Activated CD8-positive, alpha-beta T cell treated with anti-CD3 and anti-CD28 coated beads for 36 hours (primary cell): ENCODE measurements at regions of chr1 and their contacts with region 1.

Region 1: GRCh38 chr1:23184212-23184934 is 15.7 kb upstream of the LUZP1 start:
- DNase-seq: peak; percentile 50
- ATAC-seq: peak; percentile 34
- H3K4me3 Mint-ChIP-seq: peak overlapping the region; percentile 60
- H3K27ac Mint-ChIP-seq: no peak overlapping the region
- H3K4me1 Mint-ChIP-seq: peaks cover 3% of the 10 kb centered on the region
- H3K27me3 Mint-ChIP-seq: peaks cover 11% of the 10 kb centered on the region
- CTCF ChIP-seq: peak; percentile 92

Region 2: DNA sequence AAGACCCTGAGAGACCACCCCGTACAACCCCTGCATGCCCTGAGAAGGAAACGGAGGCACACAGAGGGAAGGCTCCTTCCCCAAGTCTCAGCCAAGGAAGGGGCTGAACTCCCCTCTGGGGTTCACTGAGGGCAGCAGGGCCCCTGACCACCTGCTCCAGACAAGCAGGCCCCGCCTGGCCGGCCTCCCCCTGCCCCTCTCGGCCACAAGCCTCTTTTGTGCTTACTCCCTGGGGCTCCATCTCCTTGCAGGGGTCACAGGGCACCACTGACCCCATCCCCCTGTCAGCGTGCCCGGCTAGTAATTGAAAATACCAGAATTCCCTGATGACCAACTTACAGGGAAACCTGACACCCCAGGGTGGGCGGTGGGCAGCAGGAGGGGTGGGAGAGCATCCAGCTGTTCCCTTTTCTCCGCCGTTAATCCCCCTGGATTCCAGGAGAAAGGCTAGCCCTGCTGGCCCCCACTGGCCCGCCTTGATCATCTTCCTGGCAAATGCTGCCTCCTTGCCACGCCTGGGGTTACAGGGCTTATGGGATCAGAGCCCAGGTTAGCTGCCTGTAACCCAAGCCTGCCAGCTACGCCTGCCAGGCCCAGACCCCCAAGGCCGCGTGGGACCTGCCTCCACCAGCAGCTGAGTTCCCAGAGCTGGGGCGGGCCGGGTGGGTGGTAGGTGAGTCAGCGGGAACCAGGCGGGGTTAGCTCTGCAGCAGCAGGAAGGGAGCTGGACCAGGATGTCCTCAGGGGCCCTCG is 307.8 kb before region 1 on chr1:
- CTCF ChIA-PET with region 1: no interaction called
- POLR2A ChIA-PET with region 1: no interaction called
- intact Hi-C with region 1: no loop called
- DNase-seq: no peak
- ATAC-seq: no peak
- H3K4me3 Mint-ChIP-seq: no peak overlapping the region
- H3K27ac Mint-ChIP-seq: no peak overlapping the region
- H3K4me1 Mint-ChIP-seq: no peaks in the 10 kb centered on the region
- H3K27me3 Mint-ChIP-seq: no peaks in the 10 kb centered on the region
- CTCF ChIP-seq: no peak

Region 3: GRCh38 chr1:22976461-22977243 is 207.7 kb before region 1 on chr1:
- CTCF ChIA-PET with region 1: interaction called, 17 read pairs
- POLR2A ChIA-PET with region 1: no interaction called
- intact Hi-C with region 1: loop called (anchors 2 kb)
- DNase-seq: peak; percentile 73
- ATAC-seq: peak; percentile 100
- H3K4me3 Mint-ChIP-seq: no peak overlapping the region
- H3K27ac Mint-ChIP-seq: no peak overlapping the region
- H3K4me1 Mint-ChIP-seq: no peaks in the 10 kb centered on the region
- H3K27me3 Mint-ChIP-seq: peaks cover 14% of the 10 kb centered on the region
- CTCF ChIP-seq: peak; percentile 59

Region 4: GRCh38 chr1:23062271-23062670 is 122.1 kb before region 1 on chr1:
- CTCF ChIA-PET with region 1: interaction called, 11 read pairs
- POLR2A ChIA-PET with region 1: no interaction called
- intact Hi-C with region 1: no loop called
- DNase-seq: no peak
- ATAC-seq: no peak
- H3K4me3 Mint-ChIP-seq: no peak overlapping the region
- H3K27ac Mint-ChIP-seq: no peak overlapping the region
- H3K4me1 Mint-ChIP-seq: peaks cover 5% of the 10 kb centered on the region
- H3K27me3 Mint-ChIP-seq: no peaks in the 10 kb centered on the region
- CTCF ChIP-seq: no peak

Region 5: GRCh38 chr1:23098463-23099170 is 85.8 kb before region 1 on chr1:
- CTCF ChIA-PET with region 1: interaction called, 748 read pairs
- POLR2A ChIA-PET with region 1: interaction called, 24 read pairs
- intact Hi-C with region 1: loop called (anchors 1 kb)
- DNase-seq: peak; percentile 76
- ATAC-seq: peak; percentile 51
- H3K4me3 Mint-ChIP-seq: peak overlapping the region; percentile 1
- H3K27ac Mint-ChIP-seq: peak overlapping the region; percentile 17
- H3K4me1 Mint-ChIP-seq: peaks cover 42% of the 10 kb centered on the region
- H3K27me3 Mint-ChIP-seq: no peaks in the 10 kb centered on the region
- CTCF ChIP-seq: peak; percentile 93

Region 6: GRCh38 chr1:23132033-23132432 is 52.3 kb before region 1 on chr1:
- CTCF ChIA-PET with region 1: interaction called, 17 read pairs
- POLR2A ChIA-PET with region 1: no interaction called
- intact Hi-C with region 1: no loop called
- DNase-seq: no peak
- ATAC-seq: peak; percentile 73
- H3K4me3 Mint-ChIP-seq: no peak overlapping the region
- H3K27ac Mint-ChIP-seq: no peak overlapping the region
- H3K4me1 Mint-ChIP-seq: peaks cover 11% of the 10 kb centered on the region
- H3K27me3 Mint-ChIP-seq: no peaks in the 10 kb centered on the region
- CTCF ChIP-seq: no peak

Region 7: DNA sequence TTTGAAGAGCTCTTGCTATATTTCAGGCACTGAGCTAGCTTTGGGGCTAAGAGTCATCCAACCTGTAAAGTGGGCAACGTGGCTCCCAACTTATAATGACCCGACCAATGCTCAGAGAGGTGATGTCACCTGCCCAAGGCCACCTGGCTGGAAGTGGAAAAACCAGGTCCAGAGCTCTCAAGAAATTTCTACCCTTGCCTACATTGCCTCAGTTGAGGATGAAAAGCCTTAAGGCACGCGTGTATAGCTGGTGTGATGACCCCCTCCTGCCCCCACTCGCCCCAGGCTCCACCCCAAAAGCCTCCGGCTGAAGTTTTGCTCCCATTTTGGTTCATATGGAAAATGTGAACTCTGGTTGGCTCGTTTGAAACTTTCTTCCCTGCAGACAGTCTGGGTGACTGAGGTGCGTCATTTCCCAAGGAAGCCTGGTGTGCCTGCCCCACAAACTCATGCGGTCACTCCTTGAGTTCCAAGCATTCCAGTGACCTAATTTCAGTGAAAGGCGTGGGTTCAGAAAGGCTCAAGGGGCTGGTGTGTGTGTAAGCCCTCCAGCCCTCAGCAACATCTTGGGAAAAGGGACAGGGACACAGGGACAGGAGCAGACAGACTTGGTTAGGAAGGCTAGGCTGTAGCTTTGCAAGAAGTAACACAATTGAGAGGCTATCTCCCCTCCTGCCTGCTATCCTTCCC is 12.4 kb after region 1 on chr1:
- CTCF ChIA-PET with region 1: interaction called, 50 read pairs
- POLR2A ChIA-PET with region 1: no interaction called
- intact Hi-C with region 1: no loop called
- DNase-seq: no peak
- ATAC-seq: no peak
- H3K4me3 Mint-ChIP-seq: no peak overlapping the region
- H3K27ac Mint-ChIP-seq: no peak overlapping the region
- H3K4me1 Mint-ChIP-seq: no peaks in the 10 kb centered on the region
- H3K27me3 Mint-ChIP-seq: peaks cover 9% of the 10 kb centered on the region
- CTCF ChIP-seq: no peak

Region 8: DNA sequence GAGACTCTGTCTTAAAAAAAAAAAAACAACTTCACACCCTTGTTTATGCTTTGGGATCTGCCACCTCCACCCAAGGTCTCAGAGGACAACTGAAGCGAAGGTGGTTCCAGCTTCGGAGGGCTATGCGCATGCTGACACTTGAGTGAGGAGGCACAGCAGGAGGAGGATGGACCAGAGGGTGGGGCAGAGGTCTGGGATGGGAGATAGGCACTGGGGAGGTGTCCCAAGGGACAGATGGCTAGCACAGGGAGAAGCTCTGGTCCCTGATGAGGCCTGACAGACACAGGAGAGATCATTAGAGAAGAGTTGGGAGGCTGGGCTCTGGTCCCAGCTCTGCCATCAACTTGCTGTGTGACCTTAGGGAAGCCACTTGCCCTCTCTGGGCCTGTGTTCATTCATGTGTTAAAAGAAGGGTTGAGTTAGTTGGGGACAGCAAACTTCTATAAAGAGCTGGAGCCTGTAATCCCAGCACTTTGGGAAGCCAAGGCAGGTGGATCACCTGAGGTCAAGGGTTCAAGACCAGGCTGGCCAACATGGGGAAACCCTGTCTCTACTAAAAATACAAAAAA is 329.8 kb after region 1 on chr1:
- CTCF ChIA-PET with region 1: no interaction called
- POLR2A ChIA-PET with region 1: no interaction called
- intact Hi-C with region 1: no loop called
- DNase-seq: no peak
- ATAC-seq: no peak
- H3K4me3 Mint-ChIP-seq: no peak overlapping the region
- H3K27ac Mint-ChIP-seq: no peak overlapping the region
- H3K4me1 Mint-ChIP-seq: no peaks in the 10 kb centered on the region
- H3K27me3 Mint-ChIP-seq: no peaks in the 10 kb centered on the region
- CTCF ChIP-seq: no peak